Heart right ventricle (tissue), 16 donors: ENCODE measurements at regions of chr19 and their contacts with region 1.

Region 1: DNA sequence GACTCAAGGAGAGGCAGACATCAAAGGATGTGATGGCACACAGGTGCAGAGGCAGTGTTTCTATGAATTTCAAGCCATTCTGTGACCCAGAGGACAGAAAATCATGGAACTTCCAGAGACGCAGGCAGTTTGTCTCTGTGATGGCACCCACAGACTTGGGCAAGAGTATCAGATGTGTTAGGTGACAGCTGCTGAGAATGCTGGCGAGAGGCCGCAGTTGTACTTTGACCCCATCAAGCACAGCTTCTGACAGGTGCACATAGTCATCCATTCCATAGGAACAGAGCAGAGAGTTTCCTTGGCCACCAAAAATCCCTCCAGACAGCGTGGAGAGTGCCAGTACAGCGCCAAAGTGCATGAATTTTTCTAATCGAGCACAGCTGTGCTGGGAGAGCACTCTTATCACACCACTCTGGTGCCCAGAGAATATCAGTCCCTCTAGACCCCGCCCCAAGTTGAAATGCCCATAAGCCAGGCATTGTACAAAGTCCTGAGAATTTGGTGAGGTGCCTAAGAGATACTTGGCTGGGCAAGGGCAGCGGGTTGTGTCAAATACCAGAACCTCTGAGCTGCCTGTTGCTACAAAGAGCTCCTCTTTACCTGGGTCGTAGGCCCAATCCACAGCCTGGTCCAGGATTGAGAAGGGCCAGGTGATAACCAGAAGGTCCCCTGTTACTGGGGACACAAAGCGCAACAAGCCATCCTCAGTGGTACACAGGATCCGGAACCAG is 12.4 kb downstream of the WDR87 start:
- DNase-seq: no peak
- ATAC-seq: no peak
- H3K4me3 ChIP-seq: no peak overlapping the region
- H3K27ac ChIP-seq: no peak overlapping the region
- H3K4me1 ChIP-seq: no peaks in the 10 kb centered on the region
- H3K27me3 ChIP-seq: peaks cover 0 to 43% (median 16%) of the 10 kb centered on the region in 7 donors
- CTCF ChIP-seq: no peak

Region 2: DNA sequence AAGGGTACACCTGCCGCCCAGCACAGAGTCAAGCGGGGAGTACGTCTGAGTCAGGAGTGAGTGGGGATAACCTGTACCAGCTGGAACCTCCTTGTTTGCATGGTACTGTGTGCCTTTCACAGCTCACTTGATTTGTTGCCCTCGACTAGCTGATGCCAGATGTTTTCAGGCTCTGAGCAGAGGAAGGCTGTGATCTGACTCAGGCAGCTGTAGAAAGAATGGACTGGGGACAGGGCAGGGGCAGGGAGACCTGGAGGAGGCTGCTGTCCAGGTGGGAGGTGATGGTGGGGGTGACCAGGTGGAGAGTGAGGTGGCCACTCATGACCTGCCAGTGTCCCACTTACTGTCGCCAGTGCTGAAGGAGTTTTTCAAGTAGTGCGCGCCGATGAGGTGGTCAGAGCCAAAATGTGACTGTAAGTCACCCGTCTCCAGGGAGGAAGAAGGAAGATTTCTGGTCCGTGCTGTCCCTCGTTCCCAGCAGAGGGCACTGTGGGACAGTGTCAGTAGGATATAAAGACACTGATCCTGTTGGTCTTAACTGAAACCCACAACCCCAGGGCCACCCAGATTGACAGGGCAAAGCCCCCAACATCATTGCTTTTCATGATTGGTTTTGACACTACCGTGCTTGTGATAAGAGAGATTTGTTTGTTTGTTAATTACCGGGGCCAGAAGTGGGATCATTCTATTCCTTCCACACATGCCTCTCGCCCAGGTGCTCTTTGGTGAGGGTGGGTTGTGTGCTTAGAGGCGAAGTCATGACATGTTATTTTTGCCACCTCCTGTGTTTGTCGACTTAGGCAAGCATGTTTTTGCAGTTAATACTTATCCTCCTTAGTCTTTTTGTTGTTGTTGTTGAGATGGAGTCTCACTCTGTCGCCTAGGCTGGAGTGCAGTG is 201.7 kb after region 1 on chr19:
- intact Hi-C with region 1: loop called in 2 of 10 experiments (anchors 2 to 5 kb)
- DNase-seq: peak; percentile 59 to 68
- ATAC-seq: peak in 6 of 8 donors; percentile 50 to 76 (median 62)
- H3K4me3 ChIP-seq: no peak overlapping the region
- H3K27ac ChIP-seq: no peak overlapping the region
- H3K4me1 ChIP-seq: peaks cover 0 to 17% (median 0%) of the 10 kb centered on the region in 9 donors
- H3K27me3 ChIP-seq: no peaks in the 10 kb centered on the region
- CTCF ChIP-seq: peak; percentile 45 to 80 (median 71)

Region 3: GRCh38 chr19:38229585-38230073 is 335.6 kb after region 1 on chr19:
- intact Hi-C with region 1: loop called in 2 of 10 experiments (anchors 5 to 10 kb)
- DNase-seq: peak; percentile 52 to 68
- ATAC-seq: peak; percentile 85 to 92 (median 86)
- H3K4me3 ChIP-seq: peak overlapping the region in 7 of 10 donors; percentile 21 to 42 (median 37)
- H3K27ac ChIP-seq: no peak overlapping the region
- H3K4me1 ChIP-seq: peaks cover 3 to 17% (median 13%) of the 10 kb centered on the region in 9 donors
- H3K27me3 ChIP-seq: peaks cover 0 to 79% (median 57%) of the 10 kb centered on the region in 7 donors
- CTCF ChIP-seq: peak in 1 of 9 donors; percentile 4